RWPE1 (cell line): ENCODE measurements at regions of chr5 and their contacts with region 1.

Region 1: GRCh38 chr5:59174248-59174844 is 591.5 kb downstream of the RAB3C start:
- DNase-seq: peak; percentile 71
- H3K27ac ChIP-seq: no peak overlapping the region
- CTCF ChIP-seq: peak; percentile 93

Region 2: DNA sequence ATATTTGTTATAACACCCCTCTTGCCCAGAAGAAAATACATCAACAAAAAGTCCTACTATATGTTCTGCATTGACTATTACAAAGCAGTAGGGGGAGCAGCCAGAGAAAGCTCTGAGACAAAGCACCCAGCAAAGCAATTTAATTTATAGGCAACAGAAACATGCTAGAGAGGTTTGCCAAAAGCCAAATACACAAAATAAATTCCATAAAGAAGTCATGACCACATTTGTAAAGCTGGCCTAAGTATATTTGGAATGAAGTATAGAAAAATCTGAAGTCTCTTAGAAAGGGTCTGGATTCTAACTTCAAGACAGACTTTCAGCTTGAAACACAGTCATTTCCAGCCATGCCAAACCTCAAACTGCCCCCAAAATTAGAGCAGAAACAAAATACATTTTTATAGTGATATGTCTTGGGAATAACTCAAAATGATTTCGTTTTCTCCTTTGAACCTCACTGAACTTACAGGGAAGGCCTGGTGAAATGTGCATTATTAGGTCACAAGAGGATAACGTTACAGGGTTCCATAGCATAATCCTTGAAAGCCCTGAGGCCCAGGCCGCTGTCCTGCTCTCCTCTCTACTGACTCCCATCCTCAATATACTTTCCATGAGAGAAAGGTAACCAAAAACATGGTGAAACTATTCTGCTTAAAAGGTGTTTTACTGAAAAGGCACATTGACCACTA is 139.7 kb before region 1 on chr5:
- CTCF ChIA-PET with region 1: interaction called, 24 read pairs
- POLR2A ChIA-PET with region 1: no interaction called
- DNase-seq: peak; percentile 56
- H3K27ac ChIP-seq: no peak overlapping the region
- CTCF ChIP-seq: peak; percentile 89

Region 3: DNA sequence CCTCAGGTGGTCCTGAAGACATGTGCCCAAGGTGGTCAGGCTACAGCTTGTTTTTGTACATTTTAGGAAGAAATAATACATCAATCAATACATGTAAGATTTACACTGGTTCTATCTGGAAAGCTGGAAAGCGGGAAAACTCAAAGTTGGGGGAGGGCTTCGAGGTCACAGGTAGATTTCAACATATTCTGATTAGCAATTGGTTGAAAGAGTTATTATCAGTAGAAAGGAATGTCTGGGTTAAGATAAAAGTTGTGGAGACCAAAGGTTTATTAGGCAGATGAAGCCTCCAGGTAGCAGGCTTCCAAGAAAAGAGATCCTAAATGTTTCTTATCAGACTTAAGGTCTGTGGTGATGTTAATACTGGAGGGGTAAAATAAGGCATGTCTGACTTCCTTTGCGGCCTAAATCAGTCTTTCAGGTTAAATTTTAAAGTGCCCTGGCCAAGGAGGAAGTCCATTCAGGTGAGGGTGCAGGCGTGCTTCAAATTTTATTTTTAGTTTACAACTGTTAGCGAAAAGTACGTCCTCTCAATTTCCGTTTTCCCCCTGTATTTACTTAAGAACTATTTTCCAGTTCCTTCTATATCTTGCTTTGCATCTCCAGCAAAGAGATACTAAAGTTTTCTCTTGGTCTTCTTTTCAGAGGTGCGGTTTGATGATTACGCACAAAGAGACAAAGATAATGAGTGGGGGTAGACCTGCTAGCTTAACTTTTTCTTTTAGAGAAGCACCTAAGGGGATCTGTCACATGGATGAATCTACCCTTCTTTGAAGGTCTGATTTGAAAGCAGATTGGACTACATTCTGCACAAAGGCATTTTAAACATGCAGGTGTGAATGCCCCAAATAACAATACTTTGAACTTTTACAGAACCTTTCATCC is 12.9 kb before region 1 on chr5:
- CTCF ChIA-PET with region 1: interaction called, 11 read pairs
- POLR2A ChIA-PET with region 1: no interaction called
- DNase-seq: no peak
- H3K27ac ChIP-seq: no peak overlapping the region
- CTCF ChIP-seq: no peak